Activated naive CD4-positive, alpha-beta T cell treated with anti-CD3 and anti-CD28 coated beads, Interleukin-2, amount 10 ng/mL, durations not matched to agents 7 days and 5 days (primary cell): ENCODE measurements at regions of chr9 and their contacts with region 1.

Region 1: DNA sequence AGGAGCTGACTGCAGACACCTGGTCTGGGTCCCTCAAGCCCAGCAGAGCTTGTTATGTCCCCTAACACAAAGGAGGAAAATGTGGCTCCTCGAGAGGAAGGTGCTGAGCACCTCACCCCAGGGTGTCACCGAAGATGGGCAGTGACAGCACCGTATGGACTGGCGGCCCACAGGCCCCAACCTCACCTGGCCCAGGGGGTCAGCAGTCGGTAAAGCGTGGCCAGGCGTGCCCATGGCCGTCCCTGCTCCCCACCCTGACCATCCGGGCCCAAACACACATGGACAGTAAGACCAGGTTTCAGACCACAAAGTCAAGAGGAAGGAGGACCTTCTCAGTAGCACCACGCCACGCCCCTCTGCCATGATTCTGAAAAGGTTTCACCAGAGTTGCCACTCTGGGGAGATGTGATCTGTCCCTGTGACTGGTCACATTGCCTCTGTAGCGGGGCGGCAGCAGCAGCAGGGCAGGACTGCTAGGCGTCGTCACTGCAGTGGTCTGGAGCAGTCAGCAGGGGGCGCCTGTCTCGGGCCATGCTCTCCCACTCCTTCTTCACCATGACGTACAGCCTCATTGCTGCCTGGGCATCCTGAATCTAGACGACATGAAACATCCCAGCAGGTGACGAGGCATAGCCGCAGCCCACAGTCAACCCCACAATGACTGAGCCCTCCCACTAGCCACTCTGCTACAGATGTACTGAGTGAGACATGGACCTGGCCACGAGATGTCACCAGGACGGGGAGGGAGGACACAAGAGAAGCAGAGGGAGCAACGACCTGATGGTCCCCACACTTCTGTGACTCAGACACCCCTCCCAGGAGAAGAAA is 11.1 kb downstream of the REXO4 start:
- DNase-seq: peak; percentile 84
- H3K4me3 Mint-ChIP-seq: no peak overlapping the region
- H3K27ac Mint-ChIP-seq: peak overlapping the region; percentile 8
- H3K4me1 Mint-ChIP-seq: peaks cover 5% of the 10 kb centered on the region
- H3K27me3 Mint-ChIP-seq: no peaks in the 10 kb centered on the region

Region 2: DNA sequence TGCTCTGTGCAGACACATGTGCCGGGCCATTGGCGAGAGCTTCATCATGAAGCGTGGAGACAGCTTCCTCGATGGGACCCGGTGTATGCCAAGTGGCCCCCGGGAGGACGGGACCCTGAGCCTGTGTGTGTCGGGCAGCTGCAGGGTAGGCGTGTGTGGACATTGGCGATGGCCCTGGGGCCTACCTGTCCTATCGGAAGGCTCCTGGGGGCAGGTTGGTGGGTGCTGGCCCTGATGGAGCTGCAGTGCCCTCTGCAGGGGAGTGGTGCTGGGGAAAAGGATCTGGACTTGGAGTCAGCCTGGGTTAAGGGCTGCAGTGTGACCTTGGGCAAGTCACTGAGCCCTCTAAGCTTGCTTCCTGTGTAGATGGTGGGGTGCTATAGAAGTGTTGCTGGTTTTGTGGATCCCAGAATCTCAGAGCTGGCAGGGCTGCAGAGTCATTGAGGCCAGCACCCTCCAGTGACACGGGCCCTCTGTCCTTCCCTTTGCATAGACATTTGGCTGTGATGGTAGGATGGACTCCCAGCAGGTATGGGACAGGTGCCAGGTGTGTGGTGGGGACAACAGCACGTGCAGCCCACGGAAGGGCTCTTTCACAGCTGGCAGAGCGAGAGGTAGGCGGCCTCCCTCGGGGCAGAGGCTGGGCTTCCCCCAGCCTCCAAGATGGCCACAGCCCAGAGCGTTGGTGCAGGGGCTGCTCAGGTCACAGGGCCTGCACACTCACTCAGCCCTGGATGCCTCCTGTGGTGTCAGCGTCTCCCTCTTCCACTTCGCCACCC is 31.2 kb after region 1 on chr9:
- CTCF ChIA-PET with region 1: no interaction called
- DNase-seq: no peak
- H3K4me3 Mint-ChIP-seq: no peak overlapping the region
- H3K27ac Mint-ChIP-seq: no peak overlapping the region
- H3K4me1 Mint-ChIP-seq: no peaks in the 10 kb centered on the region
- H3K27me3 Mint-ChIP-seq: no peaks in the 10 kb centered on the region

Region 3: GRCh38 chr9:133485361-133486260 is 78.9 kb after region 1 on chr9:
- CTCF ChIA-PET with region 1: interaction called, 13 read pairs
- DNase-seq: peak; percentile 38
- H3K4me3 Mint-ChIP-seq: no peak overlapping the region
- H3K27ac Mint-ChIP-seq: no peak overlapping the region
- H3K4me1 Mint-ChIP-seq: peaks cover 10% of the 10 kb centered on the region
- H3K27me3 Mint-ChIP-seq: peaks cover 42% of the 10 kb centered on the region